ENCODE measurements at regions of chr1 and their contacts with region 1.

Region 1: DNA sequence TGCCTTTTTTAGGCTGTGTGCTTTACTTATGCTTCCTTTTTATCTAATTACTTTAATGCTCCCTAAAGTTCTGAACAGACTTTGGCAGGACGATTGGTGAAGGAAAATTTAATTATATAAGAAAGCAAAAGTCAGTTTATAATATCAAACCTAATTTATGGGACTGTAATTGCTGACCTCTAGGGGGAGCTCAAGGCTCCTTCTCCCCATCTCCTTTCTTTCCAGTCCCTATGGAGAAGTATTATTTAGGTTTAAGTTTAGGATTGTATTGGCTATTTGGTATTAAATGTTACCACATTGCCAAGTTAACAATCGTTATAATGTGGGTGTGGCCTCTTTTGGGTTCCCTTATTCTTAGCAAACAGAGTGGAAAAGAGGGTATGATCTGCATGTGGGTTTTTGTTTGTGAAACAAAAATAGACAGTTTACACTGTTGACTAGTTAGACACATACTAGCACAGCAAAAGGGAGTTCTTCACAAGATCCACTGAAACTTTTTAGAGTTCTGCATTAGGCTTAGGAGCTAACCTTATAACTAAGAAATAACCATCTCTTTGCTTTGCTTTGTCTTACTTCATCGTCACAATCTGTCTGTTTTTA is 48.2 kb upstream of the TNFSF4 start:
- DNase-seq: peak; percentile 56
- H3K4me3 ChIP-seq: no peak overlapping the region
- H3K27ac ChIP-seq: no peak overlapping the region
- H3K4me1 ChIP-seq: no peaks in the 10 kb centered on the region
- H3K27me3 ChIP-seq: no peaks in the 10 kb centered on the region
- CTCF ChIP-seq: peak; percentile 61 to 66
- POLR2A ChIP-seq: no peak

Region 2: DNA sequence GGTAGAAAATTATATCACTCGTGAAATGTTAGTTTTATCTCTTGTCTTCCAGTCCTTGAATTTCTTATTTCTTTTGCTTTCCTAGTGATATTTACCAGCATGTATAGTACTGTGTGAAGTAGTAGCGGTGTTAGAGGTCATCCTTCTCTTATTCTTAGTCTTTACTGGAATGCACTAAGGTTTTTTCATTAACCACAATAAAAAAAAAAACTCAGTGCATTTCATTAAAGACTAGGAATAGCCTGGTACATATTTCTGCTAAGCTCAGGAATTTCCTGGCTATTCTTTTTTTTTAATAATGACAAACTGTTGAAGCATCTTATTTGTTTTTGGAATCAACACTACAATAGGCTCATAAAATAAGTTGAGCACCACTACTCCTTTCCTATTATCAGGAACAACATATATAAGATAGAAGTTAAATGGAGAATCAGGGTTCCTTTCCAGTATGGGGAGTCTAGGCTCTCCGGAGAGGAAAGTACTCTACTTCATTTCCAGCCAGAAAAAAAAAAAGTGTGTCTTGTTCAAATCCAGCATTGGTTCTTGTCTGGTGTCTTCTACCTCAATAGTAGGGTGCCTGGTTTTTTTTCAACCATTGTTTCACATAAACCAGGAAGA is 264.6 kb before region 1 on chr1:
- CTCF ChIA-PET with region 1: no interaction called
- POLR2A ChIA-PET with region 1: no interaction called
- dilution Hi-C with region 1: no loop called
- intact Hi-C with region 1: no loop called
- DNase-seq: peak; percentile 61
- H3K4me3 ChIP-seq: no peak overlapping the region
- H3K27ac ChIP-seq: peak overlapping the region; percentile 57
- H3K4me1 ChIP-seq: peaks cover 19% of the 10 kb centered on the region
- H3K27me3 ChIP-seq: no peaks in the 10 kb centered on the region
- CTCF ChIP-seq: no peak
- POLR2A ChIP-seq: no peak

Region 3: GRCh38 chr1:173276922-173277800 is 21.8 kb after region 1 on chr1:
- CTCF ChIA-PET with region 1: interaction called, 10 read pairs
- POLR2A ChIA-PET with region 1: no interaction called
- dilution Hi-C with region 1: no loop called
- intact Hi-C with region 1: no loop called
- DNase-seq: no peak
- H3K4me3 ChIP-seq: no peak overlapping the region
- H3K27ac ChIP-seq: no peak overlapping the region
- H3K4me1 ChIP-seq: no peaks in the 10 kb centered on the region
- H3K27me3 ChIP-seq: no peaks in the 10 kb centered on the region
- CTCF ChIP-seq: no peak
- POLR2A ChIP-seq: no peak